Transverse colon (tissue), 4 donors: ENCODE measurements at regions of chr13 and their contacts with region 1.

Region 1: DNA sequence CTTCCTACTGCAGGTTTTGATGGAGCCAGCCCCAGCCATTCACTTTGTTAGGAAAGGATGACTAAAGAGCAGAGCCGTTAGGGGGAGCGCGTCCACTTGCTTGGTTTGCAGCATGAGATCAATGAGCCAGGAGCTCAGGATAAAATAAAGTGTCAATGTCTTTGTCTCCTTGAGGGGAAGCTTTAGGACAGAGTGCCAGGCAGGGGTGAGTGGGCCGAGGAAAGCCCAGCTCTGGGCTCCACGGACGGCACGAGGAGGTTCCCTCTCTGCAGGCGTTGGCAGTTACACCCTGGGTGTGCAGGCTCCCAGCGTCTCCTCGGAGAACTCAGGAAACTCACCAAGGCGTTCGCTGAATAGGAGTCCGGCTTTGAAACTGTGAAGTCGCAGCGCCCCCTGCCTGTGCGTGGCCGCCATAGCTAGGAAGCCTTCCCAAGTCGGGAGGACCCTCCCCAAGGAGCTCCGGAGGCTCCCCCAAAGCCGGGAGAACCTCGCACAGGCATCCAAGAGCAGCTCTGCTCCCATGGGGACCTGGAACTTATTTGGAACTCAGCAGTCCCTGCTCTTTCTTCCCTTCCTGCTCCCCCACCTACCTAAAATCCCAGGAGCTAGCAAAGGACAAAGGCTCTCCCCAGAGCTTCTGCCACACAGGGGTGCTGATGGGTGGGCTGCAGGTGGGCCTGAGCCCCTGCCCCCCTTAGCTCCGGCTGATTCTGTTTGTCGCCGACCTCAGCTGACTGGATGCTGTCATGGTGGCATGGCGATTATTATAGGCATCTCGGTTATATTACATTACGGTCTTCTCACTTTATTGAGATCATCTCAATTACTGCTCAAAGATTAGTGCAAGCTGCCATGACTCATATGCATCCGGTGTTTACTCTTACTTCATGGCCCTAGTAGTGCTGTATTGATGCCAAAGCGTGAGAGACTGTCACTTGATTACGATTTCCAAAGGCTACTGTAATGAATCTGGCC is 34.4 kb downstream of the GSX1 start:
- DNase-seq: peak; percentile 85
- H3K4me3 ChIP-seq: peak overlapping the region in 1 of 4 donors; percentile 25
- H3K27ac ChIP-seq: no peak overlapping the region
- H3K4me1 ChIP-seq: peaks cover 0 to 19% (median 12%) of the 10 kb centered on the region in 4 donors
- H3K27me3 ChIP-seq: peaks cover 65% of the 10 kb centered on the region
- CTCF ChIP-seq: peak; percentile 91 to 94 (median 94)
- EP300 ChIP-seq: no peak
- POLR2A ChIP-seq: no peak

Region 2: DNA sequence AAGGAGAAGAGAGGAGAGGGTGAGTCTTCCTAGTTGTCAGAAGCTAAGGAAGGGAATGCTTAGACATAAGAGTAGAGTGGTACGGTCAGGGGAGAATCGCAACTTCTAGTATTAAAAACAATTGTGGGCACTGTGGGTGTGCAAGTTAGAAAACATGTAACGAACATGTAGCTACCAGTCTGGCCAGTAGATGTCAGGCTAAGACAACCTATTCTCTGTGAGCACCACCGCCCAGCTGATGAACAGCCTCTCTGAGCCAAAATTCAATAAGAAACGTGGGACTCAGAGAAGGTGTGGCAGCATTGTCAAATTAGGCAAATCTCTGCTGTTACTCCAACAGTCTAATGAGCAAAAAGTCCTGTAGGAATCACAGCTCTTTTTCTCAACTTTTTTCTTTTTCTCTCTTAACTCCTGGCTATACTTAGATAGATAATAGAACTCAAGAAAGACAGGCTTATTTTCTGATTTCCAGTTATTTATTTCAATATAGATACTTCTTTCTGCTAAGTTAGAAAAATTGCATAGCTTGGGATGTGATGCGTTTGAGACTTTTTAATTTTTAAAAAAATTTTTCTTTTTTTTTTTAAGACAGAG is 841.3 kb before region 1 on chr13:
- in situ Hi-C with region 1: loop called in 1 of 4 experiments (anchors 25 kb)
- intact Hi-C with region 1: no loop called
- DNase-seq: peak; percentile 82
- H3K4me3 ChIP-seq: no peak overlapping the region
- H3K27ac ChIP-seq: peak overlapping the region; percentile 87 to 93 (median 90)
- H3K4me1 ChIP-seq: peaks cover 18 to 48% (median 33%) of the 10 kb centered on the region in 4 donors
- H3K27me3 ChIP-seq: no peaks in the 10 kb centered on the region
- CTCF ChIP-seq: peak; percentile 76 to 95 (median 78)
- EP300 ChIP-seq: no peak
- POLR2A ChIP-seq: no peak

Region 3: DNA sequence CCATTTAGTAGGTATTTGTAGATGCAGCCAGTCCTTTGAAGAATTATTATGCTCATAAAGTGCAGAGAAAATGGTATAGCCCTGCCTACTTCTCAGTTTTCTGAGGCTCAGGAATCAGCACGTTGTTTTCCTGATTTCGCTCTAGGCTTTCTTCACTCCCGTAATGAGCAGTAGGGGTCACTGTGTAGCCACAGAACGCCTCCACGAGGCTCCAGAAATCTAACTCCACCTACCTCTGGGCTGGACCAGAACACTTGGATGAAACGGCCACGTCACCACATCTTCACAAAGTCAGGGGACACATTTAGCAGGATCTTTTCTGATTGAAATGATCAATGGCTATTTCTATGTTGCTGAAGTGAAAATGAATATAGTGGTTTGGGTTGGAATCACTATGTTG is 452.0 kb before region 1 on chr13:
- in situ Hi-C with region 1: loop called in 2 of 4 experiments (anchors 5 to 10 kb)
- intact Hi-C with region 1: loop called (anchors 5 kb)
- DNase-seq: peak; percentile 77
- H3K4me3 ChIP-seq: no peak overlapping the region
- H3K27ac ChIP-seq: peak overlapping the region; percentile 28 to 56 (median 44)
- H3K4me1 ChIP-seq: peaks cover 0 to 24% (median 0%) of the 10 kb centered on the region in 4 donors
- H3K27me3 ChIP-seq: no peaks in the 10 kb centered on the region
- CTCF ChIP-seq: peak; percentile 61 to 83 (median 68)
- EP300 ChIP-seq: no peak
- POLR2A ChIP-seq: no peak

Region 4: DNA sequence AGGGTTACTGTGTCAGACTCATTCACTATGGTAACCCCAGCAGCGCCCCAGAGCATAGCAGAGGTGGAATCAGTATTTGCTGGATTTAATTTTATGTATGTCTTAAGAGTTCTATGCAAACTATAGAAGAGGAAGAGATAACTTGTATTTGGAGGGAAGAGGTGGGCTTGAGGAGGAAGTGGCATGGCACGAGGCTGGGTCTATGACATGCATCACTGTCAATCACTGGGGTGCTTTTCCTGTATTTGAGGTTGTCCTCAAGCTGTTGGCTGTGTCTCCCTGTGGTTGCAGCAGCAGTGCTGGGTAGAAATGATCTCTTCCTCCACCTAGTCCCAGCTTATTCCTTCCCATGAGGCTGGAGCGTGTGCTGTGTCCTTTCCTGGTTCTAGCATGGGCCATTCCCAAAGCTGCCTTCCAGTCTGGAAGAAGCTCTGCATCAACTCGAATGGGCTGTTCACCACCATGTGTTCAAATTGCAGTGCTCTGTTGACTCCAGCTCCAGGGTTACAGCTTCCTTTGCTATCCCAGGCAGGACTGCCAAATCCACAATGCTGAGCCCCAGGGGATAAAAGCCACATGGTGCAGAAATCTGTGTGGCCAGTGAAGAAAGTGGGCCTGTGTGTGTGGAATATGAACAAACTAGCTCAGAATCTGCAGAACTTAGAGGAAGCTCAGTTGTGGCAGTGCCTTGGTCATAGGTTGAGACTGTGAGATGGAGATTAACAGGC is 303.2 kb before region 1 on chr13:
- in situ Hi-C with region 1: loop called in 1 of 4 experiments (anchors 25 kb)
- intact Hi-C with region 1: no loop called
- DNase-seq: no peak
- H3K4me3 ChIP-seq: no peak overlapping the region
- H3K27ac ChIP-seq: no peak overlapping the region
- H3K4me1 ChIP-seq: no peaks in the 10 kb centered on the region
- H3K27me3 ChIP-seq: peaks cover 10% of the 10 kb centered on the region
- CTCF ChIP-seq: no peak
- EP300 ChIP-seq: no peak
- POLR2A ChIP-seq: no peak

Region 5: GRCh38 chr13:27842571-27842970 is 15.9 kb after region 1 on chr13:
- in situ Hi-C with region 1: no loop called
- intact Hi-C with region 1: no loop called
- DNase-seq: no peak
- H3K4me3 ChIP-seq: no peak overlapping the region
- H3K27ac ChIP-seq: no peak overlapping the region
- H3K4me1 ChIP-seq: no peaks in the 10 kb centered on the region
- H3K27me3 ChIP-seq: peaks cover 56% of the 10 kb centered on the region
- CTCF ChIP-seq: no peak
- EP300 ChIP-seq: no peak
- POLR2A ChIP-seq: no peak

Region 6: DNA sequence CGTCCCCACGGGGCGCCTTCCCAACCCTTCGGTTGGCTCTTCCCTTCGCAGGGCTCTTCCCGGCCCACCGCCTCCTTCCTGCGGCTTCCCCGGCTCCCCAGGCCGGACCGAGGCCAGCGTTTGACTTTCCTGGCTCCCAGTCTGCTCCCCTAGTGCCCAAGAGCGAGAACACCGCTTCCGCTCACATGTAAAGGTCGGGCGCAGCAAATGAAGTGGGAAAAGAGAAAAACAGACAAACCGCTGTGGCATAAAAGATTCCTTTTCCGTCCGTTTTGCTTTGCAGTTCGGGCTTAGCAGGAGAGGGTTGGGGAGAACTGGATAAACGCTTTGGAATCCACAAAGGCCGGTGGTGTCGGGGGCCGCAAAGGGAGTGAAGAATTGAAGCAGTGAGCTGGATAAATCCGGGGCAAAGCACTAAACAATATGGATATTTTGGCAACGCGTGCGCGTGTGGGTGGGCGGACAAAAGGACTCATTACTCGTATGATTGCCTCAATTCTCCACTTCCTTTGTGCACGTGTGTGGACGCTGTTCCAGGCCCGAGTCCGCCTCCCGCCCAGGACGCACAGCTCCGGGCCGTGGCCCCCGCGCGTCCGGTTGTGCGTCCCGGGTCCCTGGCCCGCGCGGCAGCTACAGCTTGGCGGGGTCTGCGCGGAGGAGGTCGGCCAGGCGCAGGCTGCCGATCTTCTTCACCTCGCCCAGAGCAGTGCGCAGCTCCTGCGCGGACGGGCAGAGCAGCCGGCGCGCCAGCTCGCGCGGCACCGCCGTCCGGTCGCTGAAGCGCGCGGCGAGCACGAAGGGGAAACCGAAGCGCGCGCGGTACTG is 151.0 kb after region 1 on chr13:
- in situ Hi-C with region 1: loop called (anchors 5 to 10 kb)
- intact Hi-C with region 1: loop called (anchors 5 kb)
- DNase-seq: no peak
- H3K4me3 ChIP-seq: peak overlapping the region; percentile 24 to 61 (median 60)
- H3K27ac ChIP-seq: peak overlapping the region; percentile 84 to 97 (median 92)
- H3K4me1 ChIP-seq: peaks cover under 1 to 44% (median 19%) of the 10 kb centered on the region in 4 donors
- H3K27me3 ChIP-seq: peaks cover 92% of the 10 kb centered on the region
- CTCF ChIP-seq: peak in 1 of 5 experiments; percentile 22
- EP300 ChIP-seq: no peak
- POLR2A ChIP-seq: no peak